ENCODE measurements at regions of chr10 and their contacts with region 1.

Region 1: GRCh38 chr10:103759100-103759781 is 96.1 kb downstream of the SH3PXD2A start:
- DNase-seq: peak; percentile 68
- ATAC-seq: peak; percentile 79
- H3K4me3 Mint-ChIP-seq: no peak overlapping the region
- H3K27ac Mint-ChIP-seq: peak overlapping the region; percentile 50
- H3K4me1 Mint-ChIP-seq: peaks cover 41% of the 10 kb centered on the region
- H3K27me3 Mint-ChIP-seq: no peaks in the 10 kb centered on the region
- CTCF ChIP-seq: no peak

Region 2: DNA sequence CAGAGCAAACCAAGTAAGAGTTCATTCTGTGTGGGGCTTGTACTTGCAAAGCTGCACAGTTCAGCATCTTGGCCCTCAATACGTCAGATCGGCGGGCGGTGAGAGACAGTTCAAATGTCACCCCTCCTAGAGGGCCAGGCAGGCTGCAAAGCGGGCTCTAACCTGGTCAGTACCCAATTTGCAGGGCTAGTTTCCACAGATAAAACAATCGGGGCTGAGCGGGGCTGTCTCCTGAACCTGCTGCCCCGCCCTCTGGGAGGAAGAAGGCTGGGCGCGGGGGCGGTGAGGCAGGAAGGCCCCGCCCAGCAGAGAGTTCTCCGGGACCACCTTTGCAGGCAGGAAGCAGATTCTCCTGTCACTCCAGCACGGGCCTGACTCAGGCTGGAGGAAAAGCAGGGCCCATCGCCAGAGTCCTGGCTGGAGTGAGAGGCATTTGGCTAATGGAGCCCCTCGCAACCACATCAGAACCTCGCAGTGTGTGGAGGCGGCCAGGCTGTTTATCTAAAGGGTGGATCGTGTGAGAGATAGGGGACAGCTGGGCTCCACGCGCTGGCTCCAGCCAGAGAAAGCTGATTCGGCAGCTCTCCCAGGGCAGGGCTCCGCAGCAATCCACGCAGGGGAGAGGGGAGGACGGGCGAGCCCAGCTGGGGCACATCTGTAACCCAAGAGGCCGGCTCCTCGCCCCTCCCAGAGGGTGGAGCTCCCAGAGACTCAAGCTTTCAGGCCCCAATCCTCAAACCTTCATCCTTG is 13.0 kb after region 1 on chr10:
- CTCF ChIA-PET with region 1: interaction called, 23 read pairs
- POLR2A ChIA-PET with region 1: interaction called, 4 read pairs
- intact Hi-C with region 1: no loop called
- DNase-seq: peak; percentile 72
- ATAC-seq: peak; percentile 78
- H3K4me3 Mint-ChIP-seq: peak overlapping the region; percentile 77
- H3K27ac Mint-ChIP-seq: peak overlapping the region; percentile 90
- H3K4me1 Mint-ChIP-seq: peaks cover 17% of the 10 kb centered on the region
- H3K27me3 Mint-ChIP-seq: no peaks in the 10 kb centered on the region
- CTCF ChIP-seq: no peak